ENCODE measurements at regions of chr11 and their contacts with region 1.

Region 1: DNA sequence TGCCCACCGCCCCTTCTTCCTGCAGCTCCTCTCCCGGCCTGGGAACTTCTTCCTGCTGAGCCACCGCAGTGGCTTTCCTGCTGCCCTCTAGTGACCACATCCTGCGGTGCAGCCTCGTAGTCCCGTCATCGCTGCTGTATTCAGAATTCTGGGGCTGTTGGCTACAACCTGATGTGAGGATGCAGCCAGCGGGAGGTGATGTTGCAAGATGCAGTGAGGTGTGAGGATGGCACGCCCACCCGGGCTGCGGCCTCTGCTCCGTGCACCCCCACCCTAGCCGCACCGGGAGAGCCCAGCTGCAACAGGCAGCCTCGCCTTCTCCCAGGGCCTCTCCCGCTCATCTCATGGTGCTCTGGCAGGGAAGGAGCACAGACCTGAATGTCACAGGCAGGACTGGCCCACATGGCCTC is 10.1 kb downstream of the CHST1 start:
- DNase-seq: peak; percentile 76
- H3K4me3 Mint-ChIP-seq: no peak overlapping the region
- H3K27ac Mint-ChIP-seq: no peak overlapping the region
- H3K4me1 Mint-ChIP-seq: no peaks in the 10 kb centered on the region
- H3K27me3 Mint-ChIP-seq: peaks cover 23% of the 10 kb centered on the region

Region 2: DNA sequence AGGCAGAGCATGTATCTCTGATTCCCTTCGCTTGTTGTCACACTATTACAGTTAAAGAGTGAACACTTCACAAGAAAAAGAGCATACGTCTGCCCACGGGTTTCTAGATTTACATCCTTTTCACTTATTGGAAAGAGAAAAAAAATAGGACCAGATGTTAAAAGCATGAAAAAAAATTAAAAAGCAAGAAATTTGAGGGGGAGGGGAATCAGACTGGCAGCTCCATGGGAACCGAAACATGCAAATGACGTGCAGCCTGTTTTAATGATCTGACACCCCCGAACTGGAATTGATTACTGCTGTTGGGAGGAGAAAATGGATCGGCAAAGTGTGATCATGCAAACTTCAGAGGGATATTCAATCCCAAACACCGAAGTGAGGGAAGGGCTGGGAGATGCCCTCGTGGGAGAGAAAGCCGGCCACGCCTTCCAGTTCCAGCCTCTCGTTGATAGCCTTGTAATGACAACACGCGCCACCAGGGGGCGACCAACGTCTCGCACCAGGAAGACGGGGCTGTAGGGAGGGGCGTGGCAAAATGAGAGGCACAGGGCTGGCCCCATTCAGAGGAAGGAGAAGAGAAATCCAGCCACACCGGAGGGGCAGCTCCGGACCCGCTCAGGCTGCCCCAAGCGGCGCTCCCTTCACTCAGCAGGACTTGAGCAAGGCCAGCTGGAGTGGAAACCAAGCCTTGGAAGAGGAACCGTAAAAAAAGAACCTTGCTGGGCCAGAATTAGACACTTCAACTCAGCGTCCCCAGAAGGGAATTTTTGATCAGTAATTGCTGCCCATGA is 315.4 kb before region 1 on chr11:
- CTCF ChIA-PET with region 1: interaction called, 13 read pairs
- POLR2A ChIA-PET with region 1: no interaction called
- intact Hi-C with region 1: loop called (anchors 1 kb)
- DNase-seq: peak; percentile 95
- H3K4me3 Mint-ChIP-seq: peak overlapping the region; percentile 62
- H3K27ac Mint-ChIP-seq: no peak overlapping the region
- H3K4me1 Mint-ChIP-seq: peaks cover 16% of the 10 kb centered on the region
- H3K27me3 Mint-ChIP-seq: peaks cover 11% of the 10 kb centered on the region

Region 3: DNA sequence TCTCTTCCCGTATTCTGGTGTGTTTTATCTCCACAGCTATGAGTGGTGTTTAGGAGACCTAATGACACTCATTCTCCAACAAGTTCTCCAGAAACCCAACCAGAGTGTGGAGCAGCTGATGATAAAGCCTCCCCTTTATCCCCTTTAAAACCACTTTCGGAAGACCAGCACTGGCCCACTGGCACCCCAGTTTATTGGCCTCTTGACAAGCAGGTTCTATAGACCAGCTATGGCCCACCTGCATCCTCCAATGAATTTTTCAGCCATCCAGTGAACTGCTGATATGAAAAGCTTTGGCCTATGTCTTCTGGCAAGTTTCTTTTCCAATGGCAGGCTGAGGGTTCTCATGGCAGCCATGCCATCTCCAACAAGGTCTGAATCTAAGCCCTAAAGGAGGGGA is 17.3 kb before region 1 on chr11:
- CTCF ChIA-PET with region 1: interaction called, 13 read pairs
- POLR2A ChIA-PET with region 1: no interaction called
- intact Hi-C with region 1: no loop called
- DNase-seq: no peak
- H3K4me3 Mint-ChIP-seq: no peak overlapping the region
- H3K27ac Mint-ChIP-seq: no peak overlapping the region
- H3K4me1 Mint-ChIP-seq: no peaks in the 10 kb centered on the region
- H3K27me3 Mint-ChIP-seq: peaks cover 22% of the 10 kb centered on the region